Ovary (tissue), 10 donors: ENCODE measurements at regions of chr1 and their contacts with region 1.

Region 1: GRCh38 chr1:1758692-1759455 is 19.4 kb downstream of the NADK start:
- DNase-seq: peak in 1 of 5 donors; percentile 46
- H3K4me3 ChIP-seq: no peak overlapping the region
- H3K27ac ChIP-seq: no peak overlapping the region
- H3K4me1 ChIP-seq: no peaks in the 10 kb centered on the region
- H3K27me3 ChIP-seq: no peaks in the 10 kb centered on the region
- CTCF ChIP-seq: no peak
- EP300 ChIP-seq: no peak
- POLR2A ChIP-seq: no peak

Region 2: GRCh38 chr1:1900883-1901640 is 142.2 kb after region 1 on chr1:
- intact Hi-C with region 1: loop called in 2 of 4 experiments (anchors 5 to 10 kb)
- DNase-seq: no peak
- H3K4me3 ChIP-seq: no peak overlapping the region
- H3K27ac ChIP-seq: no peak overlapping the region
- H3K4me1 ChIP-seq: peaks cover 4% of the 10 kb centered on the region
- H3K27me3 ChIP-seq: no peaks in the 10 kb centered on the region
- CTCF ChIP-seq: no peak
- EP300 ChIP-seq: no peak
- POLR2A ChIP-seq: no peak